ENCODE measurements at regions of chr2 and their contacts with region 1.

Region 1: DNA sequence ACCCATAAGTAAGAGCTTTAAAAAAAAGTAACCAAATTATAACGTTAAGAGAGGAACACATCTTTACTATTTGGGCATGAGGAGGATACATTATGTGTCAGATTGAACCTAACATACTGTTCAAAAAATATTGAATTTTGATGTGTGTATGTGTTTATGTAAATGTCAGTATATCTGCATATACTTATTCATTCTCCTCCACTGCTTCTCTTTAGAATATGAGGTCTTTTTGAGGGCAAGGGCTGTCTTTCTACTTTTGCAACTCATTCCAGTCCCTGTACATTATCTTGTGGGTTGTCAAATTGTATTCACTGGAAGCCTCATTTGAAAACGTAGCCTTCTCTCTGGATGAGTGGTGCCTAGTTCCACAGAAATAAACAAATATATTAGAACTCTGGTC is 509.4 kb upstream of the HNMT start:
- DNase-seq: no peak
- H3K4me3 ChIP-seq: no peak overlapping the region
- H3K27ac ChIP-seq: no peak overlapping the region
- H3K4me1 ChIP-seq: no peaks in the 10 kb centered on the region
- H3K27me3 ChIP-seq: no peaks in the 10 kb centered on the region
- CTCF ChIP-seq: no peak

Region 2: GRCh38 chr2:137031731-137032130 is 423.2 kb before region 1 on chr2:
- CTCF ChIA-PET with region 1: no interaction called
- POLR2A ChIA-PET with region 1: no interaction called
- intact Hi-C with region 1: no loop called
- DNase-seq: no peak
- H3K4me3 ChIP-seq: no peak overlapping the region
- H3K27ac ChIP-seq: no peak overlapping the region
- H3K4me1 ChIP-seq: no peaks in the 10 kb centered on the region
- H3K27me3 ChIP-seq: no peaks in the 10 kb centered on the region
- CTCF ChIP-seq: no peak

Region 3: DNA sequence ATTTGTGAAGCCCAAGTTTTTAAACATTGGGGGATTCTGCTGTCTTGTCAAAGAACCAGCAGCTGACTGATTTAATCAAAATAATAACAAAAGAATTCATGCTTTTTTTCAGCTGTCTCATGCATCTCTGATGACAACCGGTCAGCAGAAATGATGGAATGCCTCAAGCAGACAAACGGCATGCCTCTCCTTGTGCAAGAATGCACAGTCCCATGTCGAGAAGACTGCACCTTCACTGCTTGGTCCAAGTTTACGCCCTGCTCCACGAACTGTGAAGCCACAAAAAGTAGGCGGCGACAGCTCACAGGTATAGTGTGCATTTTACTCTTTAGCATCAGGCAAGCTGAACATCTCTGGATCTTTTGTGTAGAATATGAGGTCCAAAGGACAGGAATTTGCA is 49.4 kb before region 1 on chr2:
- CTCF ChIA-PET with region 1: no interaction called
- POLR2A ChIA-PET with region 1: no interaction called
- intact Hi-C with region 1: loop called (anchors 2 kb)
- DNase-seq: no peak
- H3K4me3 ChIP-seq: no peak overlapping the region
- H3K27ac ChIP-seq: no peak overlapping the region
- H3K4me1 ChIP-seq: no peaks in the 10 kb centered on the region
- H3K27me3 ChIP-seq: no peaks in the 10 kb centered on the region
- CTCF ChIP-seq: no peak

Measured in A673 (cell line).